Activated CD4-positive, alpha-beta memory T cell treated with anti-CD3 and anti-CD28 coated beads for 36 hours (primary cell): ENCODE measurements at regions of chr7 and their contacts with region 1.

Region 1: GRCh38 chr7:1919539-1920265 is 249.6 kb downstream of the ELFN1 start:
- DNase-seq: no peak
- H3K4me3 Mint-ChIP-seq: peak overlapping the region; percentile 68
- H3K27ac Mint-ChIP-seq: no peak overlapping the region
- H3K4me1 Mint-ChIP-seq: peaks cover 48% of the 10 kb centered on the region
- H3K27me3 Mint-ChIP-seq: peaks cover 3% of the 10 kb centered on the region

Region 2: GRCh38 chr7:1569833-1570633 is 349.7 kb before region 1 on chr7 and contains the start of gene PSMG3:
- CTCF ChIA-PET with region 1: no interaction called
- POLR2A ChIA-PET with region 1: no interaction called
- intact Hi-C with region 1: loop called (anchors 10 kb)
- DNase-seq: peak; percentile 92
- H3K4me3 Mint-ChIP-seq: peak within 1 kb of the TSS; percentile 91
- H3K27ac Mint-ChIP-seq: peak within 1 kb of the TSS; percentile 98
- H3K4me1 Mint-ChIP-seq: peaks cover 38% of the 10 kb centered on the region
- H3K27me3 Mint-ChIP-seq: no peaks in the 10 kb centered on the region
- total RNA-seq, gene PSMG3: 48.1 to 55.0 TPM

Region 3: DNA sequence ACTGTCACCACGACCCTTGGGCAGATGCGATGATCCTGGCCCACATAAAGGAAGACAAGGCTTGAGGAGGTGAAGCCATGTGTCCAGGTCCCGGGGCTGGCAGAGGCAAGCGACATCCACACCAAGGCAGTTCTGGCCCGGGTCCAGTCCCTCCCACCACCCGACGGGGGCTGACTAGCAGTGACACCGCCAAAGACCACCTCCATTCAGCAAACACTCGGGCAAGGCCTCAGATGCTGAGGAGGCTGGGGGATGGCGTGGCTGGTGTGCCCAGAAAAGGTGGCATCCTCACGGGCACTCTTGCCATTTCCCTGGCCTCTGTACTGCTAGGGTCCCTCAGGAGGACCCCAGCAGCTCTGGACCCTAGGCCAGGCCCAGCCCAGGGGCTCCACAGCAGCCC is 30.6 kb before region 1 on chr7:
- CTCF ChIA-PET with region 1: no interaction called
- POLR2A ChIA-PET with region 1: no interaction called
- intact Hi-C with region 1: no loop called
- DNase-seq: no peak
- H3K4me3 Mint-ChIP-seq: no peak overlapping the region
- H3K27ac Mint-ChIP-seq: no peak overlapping the region
- H3K4me1 Mint-ChIP-seq: peaks cover 2% of the 10 kb centered on the region
- H3K27me3 Mint-ChIP-seq: no peaks in the 10 kb centered on the region

Region 4: GRCh38 chr7:1961701-1962276 is 42.1 kb after region 1 on chr7:
- CTCF ChIA-PET with region 1: no interaction called
- POLR2A ChIA-PET with region 1: no interaction called
- intact Hi-C with region 1: loop called (anchors 1 kb)
- DNase-seq: peak; percentile 80
- H3K4me3 Mint-ChIP-seq: peak overlapping the region; percentile 43
- H3K27ac Mint-ChIP-seq: peak overlapping the region; percentile 84
- H3K4me1 Mint-ChIP-seq: peaks cover 5% of the 10 kb centered on the region
- H3K27me3 Mint-ChIP-seq: no peaks in the 10 kb centered on the region

Region 5: GRCh38 chr7:2299131-2299829 is 379.6 kb after region 1 on chr7:
- CTCF ChIA-PET with region 1: no interaction called
- POLR2A ChIA-PET with region 1: no interaction called
- intact Hi-C with region 1: no loop called
- DNase-seq: peak; percentile 68
- H3K4me3 Mint-ChIP-seq: no peak overlapping the region
- H3K27ac Mint-ChIP-seq: peak overlapping the region; percentile 33
- H3K4me1 Mint-ChIP-seq: peaks cover 23% of the 10 kb centered on the region
- H3K27me3 Mint-ChIP-seq: no peaks in the 10 kb centered on the region

Region 6: GRCh38 chr7:2314209-2314955 is 394.7 kb after region 1 on chr7 and contains the start of gene SNX8:
- CTCF ChIA-PET with region 1: no interaction called
- POLR2A ChIA-PET with region 1: no interaction called
- intact Hi-C with region 1: loop called (anchors 10 kb)
- DNase-seq: peak; percentile 96
- H3K4me3 Mint-ChIP-seq: no peak within 1 kb of the TSS
- H3K27ac Mint-ChIP-seq: peak within 1 kb of the TSS; percentile 56
- H3K4me1 Mint-ChIP-seq: peaks cover 10% of the 10 kb centered on the region
- H3K27me3 Mint-ChIP-seq: no peaks in the 10 kb centered on the region
- total RNA-seq, gene SNX8: 35.4 to 40.2 TPM